HCT116 (cell line): ENCODE measurements at regions of chr19 and their contacts with region 1.

Region 1: DNA sequence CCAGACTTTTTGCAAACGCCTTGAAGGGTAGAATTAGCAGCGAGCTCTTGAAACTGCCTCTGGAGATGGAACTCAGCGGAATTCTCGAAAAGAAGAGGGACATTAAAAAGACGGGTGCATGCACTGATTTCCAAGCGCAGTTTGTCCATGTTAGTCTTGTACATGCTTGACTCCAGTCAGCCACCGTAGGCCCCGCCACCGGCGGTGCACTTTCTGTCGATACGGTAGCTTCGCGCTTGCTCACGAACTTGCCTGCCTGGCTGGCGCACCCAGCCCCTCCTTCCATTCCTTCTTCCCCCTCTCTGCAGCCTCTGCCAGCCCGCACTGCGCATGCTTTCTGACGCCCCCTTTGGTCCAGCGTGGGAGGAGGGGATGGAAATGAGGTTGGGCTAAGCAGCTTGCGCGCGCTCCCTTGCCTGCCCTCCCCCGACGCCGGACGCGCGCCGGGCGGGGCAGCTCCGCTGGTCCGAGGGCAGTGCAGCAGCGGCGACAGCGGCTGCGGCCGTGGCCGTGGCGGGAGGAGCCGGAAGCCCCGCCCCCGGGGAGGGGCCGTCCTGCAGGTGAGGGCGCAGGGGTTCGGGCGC is at the start of gene ZNF575:
- DNase-seq: peak; percentile 87
- ATAC-seq: peak; percentile 79
- H3K4me3 ChIP-seq: peak within 1 kb of the TSS; percentile 62 to 70
- H3K27ac ChIP-seq: peak within 1 kb of the TSS; percentile 95
- H3K4me1 ChIP-seq: peaks cover 27 to 52% of the 10 kb centered on the region in 2 experiments
- H3K27me3 ChIP-seq: no peaks in the 10 kb centered on the region
- CTCF ChIP-seq: no peak
- POLR2A ChIP-seq: no peak
- RAD21 ChIP-seq: no peak
- total RNA-seq, gene ZNF575: 1.9 TPM

Region 2: GRCh38 chr19:43555185-43555770 is 22.2 kb after region 1 on chr19:
- CTCF ChIA-PET with region 1: interaction called, 18 read pairs
- POLR2A ChIA-PET with region 1: no interaction called
- RAD21 ChIA-PET with region 1: no interaction called
- intact Hi-C with region 1: no loop called
- DNase-seq: no peak
- ATAC-seq: peak; percentile 92
- H3K4me3 ChIP-seq: no peak overlapping the region
- H3K27ac ChIP-seq: no peak overlapping the region
- H3K4me1 ChIP-seq: no peaks in the 10 kb centered on the region
- H3K27me3 ChIP-seq: no peaks in the 10 kb centered on the region
- CTCF ChIP-seq: peak; percentile 55 to 95 (median 88)
- POLR2A ChIP-seq: no peak
- RAD21 ChIP-seq: peak; percentile 58

Region 3: DNA sequence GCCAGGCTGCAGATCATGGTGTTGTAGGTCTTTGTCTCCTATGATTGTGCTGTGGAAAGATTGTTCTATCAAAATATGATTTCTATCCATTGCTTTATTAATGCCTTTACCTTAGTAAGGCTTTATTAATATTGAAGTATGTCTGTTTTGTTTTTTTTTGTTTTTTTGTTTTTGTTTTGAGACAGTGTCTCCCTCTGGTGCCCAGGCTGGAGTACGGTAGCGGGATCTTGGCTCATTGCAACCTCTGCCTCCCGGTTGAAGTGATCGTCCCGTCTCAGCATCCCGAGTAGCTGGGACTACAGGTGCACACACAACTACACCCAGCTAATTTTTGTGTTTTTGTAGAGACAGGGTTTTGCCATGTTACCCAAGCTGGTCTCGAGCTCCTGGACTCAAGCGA is 190.5 kb after region 1 on chr19:
- CTCF ChIA-PET with region 1: no interaction called
- POLR2A ChIA-PET with region 1: no interaction called
- RAD21 ChIA-PET with region 1: no interaction called
- intact Hi-C with region 1: loop called (anchors 5 kb)
- DNase-seq: peak; percentile 33
- ATAC-seq: peak; percentile 81
- H3K4me3 ChIP-seq: no peak overlapping the region
- H3K27ac ChIP-seq: no peak overlapping the region
- H3K4me1 ChIP-seq: peaks cover 4 to 11% of the 10 kb centered on the region in 2 experiments; a peak in 3 of 4 replicates
- H3K27me3 ChIP-seq: no peaks in the 10 kb centered on the region
- CTCF ChIP-seq: peak; percentile 78 to 80 (median 79); a peak in 5 of 6 replicates
- POLR2A ChIP-seq: no peak
- RAD21 ChIP-seq: peak; percentile 90